ENCODE measurements at regions of chr10 and their contacts with region 1.

Region 1: GRCh38 chr10:31031558-31032257 is at the start of gene ZNF438:
- DNase-seq: peak; percentile 91 to 98 (median 95)
- ATAC-seq: peak; percentile 81
- H3K4me3 ChIP-seq: peak within 1 kb of the TSS; percentile 74 to 98
- H3K4me3 Mint-ChIP-seq: peak within 1 kb of the TSS; percentile 90
- H3K27ac ChIP-seq: peak within 1 kb of the TSS; percentile 99 to 100
- H3K27ac Mint-ChIP-seq: peak within 1 kb of the TSS; percentile 99
- H3K4me1 ChIP-seq: peaks cover 20% of the 10 kb centered on the region
- H3K4me1 Mint-ChIP-seq: peaks cover 21% of the 10 kb centered on the region
- H3K27me3 ChIP-seq: no peaks in the 10 kb centered on the region
- H3K27me3 Mint-ChIP-seq: no peaks in the 10 kb centered on the region
- CTCF ChIP-seq: peak; percentile 59
- total RNA-seq, gene ZNF438: 1.5 to 1.7 TPM

Region 2: DNA sequence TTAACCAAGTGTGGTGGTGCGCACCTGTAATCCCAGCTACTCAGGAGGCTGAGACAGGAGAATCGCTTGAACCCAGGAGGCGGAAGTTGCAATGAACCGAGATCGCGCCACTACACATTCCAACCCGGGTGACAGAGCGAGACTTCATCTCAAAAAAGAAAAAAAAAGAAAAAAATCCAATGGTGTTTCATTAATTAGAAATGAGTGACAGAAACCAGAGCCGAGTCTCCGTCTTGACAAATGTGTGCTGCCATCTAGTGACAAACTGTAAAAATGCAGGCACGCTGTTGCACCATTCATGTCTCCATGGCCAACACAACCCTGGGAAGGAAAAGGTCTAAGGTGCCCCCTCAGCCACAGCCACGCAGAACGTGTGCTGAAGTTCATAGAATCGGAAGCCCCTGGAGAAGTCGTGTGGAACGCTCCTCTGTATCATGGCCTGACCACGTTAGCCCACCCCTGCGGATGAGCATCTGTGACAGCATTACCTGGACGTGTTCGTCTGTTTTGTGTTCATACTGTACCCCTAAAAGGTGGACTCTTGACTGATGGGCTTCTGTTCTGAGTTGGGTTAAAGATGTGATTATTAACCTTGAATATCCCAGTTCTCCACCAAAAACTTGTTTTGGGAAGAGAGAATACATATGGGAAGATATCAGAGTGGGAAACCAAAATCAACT is 497.1 kb before region 1 on chr10:
- CTCF ChIA-PET with region 1: no interaction called
- POLR2A ChIA-PET with region 1: no interaction called
- intact Hi-C with region 1: loop called in 1 of 2 experiments (anchors 5 kb)
- DNase-seq: peak; percentile 41 to 88 (median 72)
- ATAC-seq: peak; percentile 43
- H3K4me3 ChIP-seq: no peak overlapping the region
- H3K4me3 Mint-ChIP-seq: no peak overlapping the region
- H3K27ac ChIP-seq: no peak overlapping the region
- H3K27ac Mint-ChIP-seq: no peak overlapping the region
- H3K4me1 ChIP-seq: peaks cover 7% of the 10 kb centered on the region
- H3K4me1 Mint-ChIP-seq: peaks cover 29% of the 10 kb centered on the region
- H3K27me3 ChIP-seq: no peaks in the 10 kb centered on the region
- H3K27me3 Mint-ChIP-seq: no peaks in the 10 kb centered on the region
- CTCF ChIP-seq: peak; percentile 92

Region 3: GRCh38 chr10:31083765-31084184 is 52.1 kb after region 1 on chr10:
- CTCF ChIA-PET with region 1: interaction called, 5 read pairs
- POLR2A ChIA-PET with region 1: no interaction called
- intact Hi-C with region 1: loop called (anchors 1 to 5 kb)
- DNase-seq: peak; percentile 19 to 73 (median 50)
- ATAC-seq: peak; percentile 75
- H3K4me3 ChIP-seq: no peak overlapping the region
- H3K4me3 Mint-ChIP-seq: no peak overlapping the region
- H3K27ac ChIP-seq: no peak overlapping the region
- H3K27ac Mint-ChIP-seq: no peak overlapping the region
- H3K4me1 ChIP-seq: no peaks in the 10 kb centered on the region
- H3K4me1 Mint-ChIP-seq: peaks cover 4% of the 10 kb centered on the region
- H3K27me3 ChIP-seq: no peaks in the 10 kb centered on the region
- H3K27me3 Mint-ChIP-seq: no peaks in the 10 kb centered on the region
- CTCF ChIP-seq: no peak

Region 4: GRCh38 chr10:31490858-31491504 is 459.3 kb after region 1 on chr10:
- CTCF ChIA-PET with region 1: no interaction called
- POLR2A ChIA-PET with region 1: no interaction called
- intact Hi-C with region 1: loop called (anchors 2 to 5 kb)
- DNase-seq: peak in 3 of 9 experiments; percentile 16 to 61 (median 47)
- ATAC-seq: peak; percentile 62
- H3K4me3 ChIP-seq: no peak overlapping the region
- H3K4me3 Mint-ChIP-seq: no peak overlapping the region
- H3K27ac ChIP-seq: no peak overlapping the region
- H3K27ac Mint-ChIP-seq: no peak overlapping the region
- H3K4me1 ChIP-seq: no peaks in the 10 kb centered on the region
- H3K4me1 Mint-ChIP-seq: peaks cover 4% of the 10 kb centered on the region
- H3K27me3 ChIP-seq: no peaks in the 10 kb centered on the region
- H3K27me3 Mint-ChIP-seq: no peaks in the 10 kb centered on the region
- CTCF ChIP-seq: peak; percentile 33

Region 5: DNA sequence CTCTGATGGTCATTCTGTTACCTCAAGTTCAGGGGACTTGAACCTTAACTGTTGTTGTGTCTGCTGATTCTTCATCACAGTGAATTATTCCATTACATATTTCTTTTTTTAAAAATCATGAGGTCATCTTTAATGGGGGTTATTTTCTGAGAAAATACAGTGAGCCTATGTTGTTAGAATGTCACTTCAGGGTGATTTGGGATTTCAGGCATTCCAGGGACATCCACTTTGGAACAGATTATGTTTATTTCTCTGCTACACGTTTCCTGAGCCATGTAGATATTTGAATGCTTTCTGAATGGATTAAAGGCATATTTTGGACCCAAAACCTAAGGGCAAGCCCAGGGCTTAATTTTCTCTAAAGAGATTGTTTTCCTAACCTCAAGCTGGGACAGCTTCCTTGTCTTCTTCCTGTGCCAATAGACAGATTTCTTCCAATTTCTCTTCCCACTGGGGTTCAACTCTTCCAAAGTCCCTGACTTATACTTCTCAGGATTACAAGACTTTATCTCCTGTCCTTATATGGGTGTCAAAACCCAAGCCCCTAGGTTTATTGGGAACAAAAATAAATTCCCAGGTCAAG is 625.2 kb after region 1 on chr10:
- CTCF ChIA-PET with region 1: no interaction called
- POLR2A ChIA-PET with region 1: no interaction called
- intact Hi-C with region 1: no loop called
- DNase-seq: no peak
- ATAC-seq: no peak
- H3K4me3 ChIP-seq: no peak overlapping the region
- H3K4me3 Mint-ChIP-seq: no peak overlapping the region
- H3K27ac ChIP-seq: no peak overlapping the region
- H3K27ac Mint-ChIP-seq: no peak overlapping the region
- H3K4me1 ChIP-seq: no peaks in the 10 kb centered on the region
- H3K4me1 Mint-ChIP-seq: no peaks in the 10 kb centered on the region
- H3K27me3 ChIP-seq: no peaks in the 10 kb centered on the region
- H3K27me3 Mint-ChIP-seq: peaks cover 14% of the 10 kb centered on the region
- CTCF ChIP-seq: no peak

Region 6: DNA sequence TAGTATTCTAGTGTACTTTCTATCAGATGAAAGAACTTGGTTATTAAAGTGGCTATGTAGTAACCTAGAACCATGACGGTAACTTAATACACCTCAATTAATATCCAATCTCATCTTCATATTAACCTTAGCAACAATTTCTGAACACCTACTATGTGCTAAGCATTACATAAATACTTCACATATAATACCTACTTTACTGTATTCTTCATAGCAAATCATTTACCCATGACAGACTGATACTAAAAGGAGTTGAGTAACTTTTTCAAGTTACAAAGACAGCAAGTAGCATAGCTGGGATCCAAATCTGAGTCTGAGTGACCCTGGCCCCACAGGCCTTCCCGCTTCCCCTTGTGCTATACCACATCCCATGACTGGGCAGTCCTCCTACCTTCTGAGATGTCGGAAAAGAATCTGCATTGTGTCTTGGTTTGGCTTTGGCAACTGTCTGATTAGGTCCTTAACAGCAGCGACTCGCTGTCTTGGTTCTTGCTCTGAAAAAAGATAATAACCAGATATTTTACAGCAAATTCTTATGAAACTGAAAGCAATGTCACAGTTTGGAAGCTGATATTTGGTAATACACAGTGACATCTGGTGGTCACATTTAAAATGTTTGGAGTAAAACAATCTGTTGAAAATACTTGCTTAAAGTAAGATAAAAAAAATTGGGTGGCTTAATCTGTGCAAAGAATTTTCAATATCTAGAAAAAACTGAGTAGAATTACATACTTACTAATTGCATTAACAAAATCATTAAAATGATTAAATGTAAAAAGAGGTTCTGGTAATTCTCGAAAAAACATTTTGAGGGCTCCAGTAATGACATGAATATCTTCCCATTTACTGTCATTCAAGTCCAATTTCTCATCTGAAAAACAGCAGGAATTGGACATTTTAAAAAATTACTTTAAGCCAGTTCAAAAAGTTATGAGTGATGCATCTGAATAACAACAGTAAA is 776.8 kb after region 1 on chr10:
- CTCF ChIA-PET with region 1: no interaction called
- POLR2A ChIA-PET with region 1: no interaction called
- intact Hi-C with region 1: loop called (anchors 1 to 2 kb)
- DNase-seq: peak in 4 of 9 experiments; percentile 4 to 74 (median 39)
- ATAC-seq: peak; percentile 57
- H3K4me3 ChIP-seq: no peak overlapping the region
- H3K4me3 Mint-ChIP-seq: no peak overlapping the region
- H3K27ac ChIP-seq: no peak overlapping the region
- H3K27ac Mint-ChIP-seq: peak overlapping the region; percentile 83
- H3K4me1 ChIP-seq: no peaks in the 10 kb centered on the region
- H3K4me1 Mint-ChIP-seq: peaks cover 4% of the 10 kb centered on the region
- H3K27me3 ChIP-seq: no peaks in the 10 kb centered on the region
- H3K27me3 Mint-ChIP-seq: no peaks in the 10 kb centered on the region
- CTCF ChIP-seq: peak; percentile 64

Region 7: DNA sequence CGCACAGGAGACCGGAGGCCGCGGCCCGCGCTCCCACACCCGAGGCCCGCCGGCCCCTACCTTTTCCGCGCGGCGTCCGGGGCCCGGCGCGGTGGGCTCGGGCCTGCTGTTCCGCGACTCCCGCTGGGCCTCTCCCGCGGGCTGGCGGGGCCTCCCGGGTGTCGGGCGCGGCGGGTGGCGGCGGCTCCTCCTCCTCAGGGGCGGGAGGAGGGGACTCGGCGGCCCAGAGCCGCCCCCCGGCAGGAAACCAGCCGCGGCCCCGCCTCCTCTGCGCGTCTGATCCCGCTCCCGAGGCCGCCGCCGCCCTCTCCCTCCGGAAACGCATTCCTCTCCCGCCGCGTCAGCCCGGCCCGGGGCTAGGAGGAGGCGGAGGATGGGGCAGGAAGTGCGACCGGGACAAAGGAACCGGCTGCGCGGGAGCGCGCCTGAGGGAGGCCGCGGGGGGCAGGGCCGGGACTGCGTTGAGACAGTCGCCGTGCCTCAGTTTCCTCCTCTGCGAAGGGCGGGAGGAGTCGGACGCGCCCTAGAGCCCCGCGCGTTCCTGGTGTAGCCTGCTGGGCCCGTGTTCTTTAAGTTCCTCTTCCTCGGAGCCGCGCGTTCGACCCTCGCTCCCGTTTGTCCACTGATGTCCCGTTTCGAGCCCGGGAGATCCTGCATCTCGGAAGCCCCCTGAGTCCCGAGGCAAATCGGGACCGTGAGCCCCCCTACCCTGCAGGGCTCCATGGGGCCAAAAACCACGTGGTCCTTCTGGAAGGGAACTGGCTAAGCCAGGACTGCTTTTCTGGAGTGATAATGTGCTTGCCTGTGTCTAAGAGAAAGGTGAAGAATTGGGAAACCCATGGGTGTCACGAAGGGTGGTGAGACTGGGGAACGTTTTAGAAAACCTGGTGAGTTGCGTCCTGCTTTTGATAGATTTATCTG is 1926.6 kb after region 1 on chr10 and contains the start of gene ITGB1:
- CTCF ChIA-PET with region 1: no interaction called
- POLR2A ChIA-PET with region 1: no interaction called
- intact Hi-C with region 1: loop called in 1 of 2 experiments (anchors 5 kb)
- DNase-seq: peak; percentile 65 to 91 (median 82)
- ATAC-seq: peak; percentile 93
- H3K4me3 ChIP-seq: peak within 1 kb of the TSS; percentile 82 to 91
- H3K4me3 Mint-ChIP-seq: peak within 1 kb of the TSS; percentile 87
- H3K27ac ChIP-seq: peak within 1 kb of the TSS; percentile 49 to 77
- H3K27ac Mint-ChIP-seq: peak within 1 kb of the TSS; percentile 74
- H3K4me1 ChIP-seq: peaks cover 27% of the 10 kb centered on the region
- H3K4me1 Mint-ChIP-seq: peaks cover 54% of the 10 kb centered on the region
- H3K27me3 ChIP-seq: no peaks in the 10 kb centered on the region
- H3K27me3 Mint-ChIP-seq: no peaks in the 10 kb centered on the region
- CTCF ChIP-seq: no peak
- total RNA-seq, gene ITGB1: 34.2 to 34.5 TPM

Measured in CD8-positive, alpha-beta T cell (primary cell).